Esophagus muscularis mucosa (tissue), 4 donors: ENCODE measurements at regions of chr15 and their contacts with region 1.

Region 1: GRCh38 chr15:77821188-77821958 is 188.7 kb upstream of the LINGO1 start:
- DNase-seq: no peak
- H3K4me3 ChIP-seq: no peak overlapping the region
- H3K27ac ChIP-seq: no peak overlapping the region
- H3K4me1 ChIP-seq: peaks cover 6 to 26% (median 22%) of the 10 kb centered on the region in 4 donors
- H3K27me3 ChIP-seq: peaks cover 0 to 74% (median 27%) of the 10 kb centered on the region in 4 donors
- CTCF ChIP-seq: peak; percentile 13 to 54 (median 19)
- EP300 ChIP-seq: no peak
- POLR2A ChIP-seq: no peak

Region 2: DNA sequence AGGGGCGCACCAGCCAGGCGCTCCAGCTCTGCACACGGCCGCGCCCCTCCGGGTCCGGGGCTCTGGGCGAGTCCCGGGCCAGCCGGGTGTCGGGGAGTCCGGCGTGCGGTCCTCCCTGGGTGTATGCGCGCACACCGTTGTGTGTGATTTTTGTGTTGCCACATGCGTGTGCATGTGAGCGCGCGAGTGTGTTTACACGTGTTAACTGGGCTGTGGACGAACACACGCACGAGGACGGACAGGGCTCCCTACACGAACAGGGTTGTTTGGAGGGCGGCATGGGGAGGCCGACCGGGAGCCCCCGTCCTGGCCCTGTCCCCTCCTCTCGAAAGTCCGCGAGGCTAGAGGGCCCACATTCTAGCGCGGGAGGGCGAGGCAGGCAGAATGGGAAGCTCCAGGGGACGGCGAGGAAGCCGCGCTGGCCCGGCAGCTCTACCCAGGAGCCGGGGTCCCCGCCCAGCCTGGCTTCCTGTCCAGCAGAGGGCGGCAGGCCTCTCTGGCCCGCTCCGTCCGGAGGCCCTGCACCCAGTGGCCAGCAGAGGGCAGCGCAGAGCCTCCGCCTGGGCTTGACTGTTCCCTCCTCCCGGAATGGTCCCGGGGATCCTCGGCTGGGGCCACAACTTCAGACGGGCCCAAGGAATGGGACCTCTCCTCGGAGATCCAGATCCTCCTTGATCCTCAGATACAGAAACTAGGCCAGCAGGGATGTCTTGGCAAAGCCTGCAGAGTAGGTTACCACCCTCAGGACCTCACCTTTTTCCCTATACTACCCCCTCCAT is 188.1 kb before region 1 on chr15:
- intact Hi-C with region 1: loop called (anchors 10 kb)
- DNase-seq: peak; percentile 94
- H3K4me3 ChIP-seq: peak overlapping the region; percentile 53 to 69 (median 56)
- H3K27ac ChIP-seq: peak overlapping the region in 1 of 4 donors; percentile 6
- H3K4me1 ChIP-seq: peaks cover 13 to 41% (median 33%) of the 10 kb centered on the region in 4 donors
- H3K27me3 ChIP-seq: peaks cover 0 to 77% (median 38%) of the 10 kb centered on the region in 4 donors
- CTCF ChIP-seq: peak in 2 of 3 experiments; percentile 97 to 99
- EP300 ChIP-seq: no peak
- POLR2A ChIP-seq: no peak

Region 3: DNA sequence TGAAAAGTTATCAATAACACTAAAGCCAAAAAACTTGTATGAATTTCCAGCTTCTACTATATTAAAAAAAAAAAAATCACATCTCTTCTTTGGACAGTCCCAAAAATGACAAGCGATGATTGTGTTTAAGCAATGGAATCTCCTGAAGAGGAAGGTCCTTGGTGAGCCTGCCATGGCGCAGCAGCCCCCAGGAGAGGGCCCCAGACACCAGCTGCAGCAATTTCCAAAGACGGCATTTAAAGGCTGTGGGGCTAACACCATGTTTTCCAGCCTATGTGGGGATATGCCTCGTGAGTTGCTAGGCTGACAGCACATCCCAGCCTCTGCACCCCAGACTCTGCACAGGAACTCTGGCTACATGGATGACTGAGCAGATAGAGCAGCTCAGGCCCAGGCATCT is 463.4 kb after region 1 on chr15:
- intact Hi-C with region 1: no loop called
- DNase-seq: no peak
- H3K4me3 ChIP-seq: no peak overlapping the region
- H3K27ac ChIP-seq: no peak overlapping the region
- H3K4me1 ChIP-seq: no peaks in the 10 kb centered on the region
- H3K27me3 ChIP-seq: no peaks in the 10 kb centered on the region
- CTCF ChIP-seq: no peak
- EP300 ChIP-seq: no peak
- POLR2A ChIP-seq: no peak

Region 4: DNA sequence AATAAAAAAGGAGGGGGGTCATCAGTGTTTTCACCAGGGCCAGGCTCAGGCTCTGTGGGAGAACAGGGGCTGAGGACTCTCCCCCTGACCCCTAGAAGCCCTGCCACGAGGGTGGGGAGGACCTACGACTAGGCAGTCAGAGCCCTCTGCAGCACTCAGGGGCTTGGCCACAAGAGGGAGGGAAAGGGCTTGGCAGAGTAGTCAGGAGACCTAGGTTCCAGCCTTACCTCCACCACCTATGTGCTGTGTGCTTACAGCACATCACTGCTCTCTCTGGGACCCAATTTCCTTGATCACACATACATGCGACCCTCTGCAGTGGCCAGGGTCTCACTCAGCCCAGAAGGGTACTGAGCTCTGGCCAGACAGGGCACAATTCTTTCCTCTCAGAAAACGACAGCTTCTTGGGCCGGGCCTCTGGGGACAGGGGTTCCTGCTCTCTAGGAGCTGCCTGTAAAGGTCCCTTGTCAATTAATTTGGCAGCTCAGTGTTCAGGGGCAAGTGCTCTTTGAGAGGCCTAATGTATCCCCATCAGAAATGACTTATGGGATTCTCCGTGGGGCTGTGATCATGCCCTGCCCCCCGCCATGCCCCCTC is 494.4 kb after region 1 on chr15:
- intact Hi-C with region 1: no loop called
- DNase-seq: no peak
- H3K4me3 ChIP-seq: no peak overlapping the region
- H3K27ac ChIP-seq: no peak overlapping the region
- H3K4me1 ChIP-seq: no peaks in the 10 kb centered on the region
- H3K27me3 ChIP-seq: peaks cover 0 to 14% (median 0%) of the 10 kb centered on the region in 4 donors
- CTCF ChIP-seq: no peak
- EP300 ChIP-seq: no peak
- POLR2A ChIP-seq: no peak